Transverse colon (tissue), 4 donors: ENCODE measurements at regions of chr12 and their contacts with region 1.

Region 1: DNA sequence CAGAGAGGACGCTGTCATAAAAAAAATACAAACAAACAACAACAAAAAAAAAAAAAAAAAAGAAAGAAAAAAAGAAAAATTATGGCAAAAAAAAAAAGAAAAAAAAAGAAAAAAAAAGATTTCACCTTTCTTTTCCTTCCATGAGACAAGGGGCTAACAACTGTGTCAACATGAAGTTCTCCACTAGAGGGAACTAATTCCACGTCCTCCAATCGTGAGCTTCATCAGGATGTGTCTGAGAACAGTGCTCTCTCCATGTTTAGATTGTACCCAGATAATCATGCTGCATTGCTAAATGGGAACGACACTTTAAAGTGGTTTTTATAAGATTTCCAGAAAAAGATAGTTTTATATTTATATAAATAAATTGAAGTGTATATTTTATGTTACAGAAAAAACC is 96.2 kb upstream of the PTPRB start:
- DNase-seq: no peak
- H3K4me3 ChIP-seq: no peak overlapping the region
- H3K27ac ChIP-seq: no peak overlapping the region
- H3K4me1 ChIP-seq: peaks cover 0 to 10% (median 0%) of the 10 kb centered on the region in 4 donors
- H3K27me3 ChIP-seq: no peaks in the 10 kb centered on the region
- CTCF ChIP-seq: peak; percentile 51 to 78 (median 60)
- EP300 ChIP-seq: no peak
- POLR2A ChIP-seq: no peak

Region 2: DNA sequence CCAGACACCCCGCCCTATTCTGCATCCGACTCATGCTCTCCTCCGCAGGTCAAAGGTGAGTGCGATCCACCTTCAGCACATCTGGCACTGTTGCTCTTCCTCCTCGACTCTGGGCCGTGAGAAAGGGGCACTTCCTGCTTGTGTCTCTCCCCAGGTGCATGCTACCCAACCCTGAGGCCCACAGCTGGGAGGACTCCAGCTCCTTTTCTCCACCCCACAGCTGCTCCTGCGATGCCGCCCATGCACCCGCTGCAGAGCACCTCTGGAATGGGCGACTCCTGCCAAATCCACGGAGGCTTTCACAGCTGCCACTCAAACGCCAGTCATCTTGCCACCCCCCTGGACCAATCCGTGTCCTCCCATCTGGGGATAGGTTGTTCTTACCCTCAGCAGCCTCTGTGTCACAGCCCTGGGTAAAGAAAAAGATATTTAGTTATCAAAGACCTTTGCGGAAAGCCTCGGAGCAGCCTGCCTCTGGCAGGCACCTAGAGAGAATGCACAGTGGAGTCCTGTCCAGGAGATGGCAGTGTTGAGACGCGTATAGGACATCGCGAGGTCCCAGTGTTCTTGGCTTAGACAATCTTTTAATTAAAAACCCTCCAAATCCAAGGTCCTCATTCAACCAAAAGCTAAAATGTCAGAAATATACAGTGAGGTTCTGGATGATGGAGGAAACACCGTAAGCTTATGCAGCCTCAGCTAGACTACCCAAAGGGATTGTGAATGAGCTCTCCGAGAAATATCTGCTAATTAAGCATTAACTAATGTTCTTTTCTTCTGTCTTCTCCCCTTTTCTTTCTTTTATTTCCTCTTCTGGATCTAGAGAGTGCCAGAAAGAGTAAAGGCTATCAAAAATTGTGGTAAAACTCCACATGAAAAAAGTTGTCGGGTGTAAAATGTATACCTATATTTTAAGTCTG is 854.1 kb before region 1 on chr12:
- in situ Hi-C with region 1: loop called in 3 of 4 experiments (anchors 10 to 25 kb)
- intact Hi-C with region 1: loop called (anchors 10 kb)
- DNase-seq: peak; percentile 75
- H3K4me3 ChIP-seq: peak overlapping the region in 2 of 4 donors; percentile 7 to 24
- H3K27ac ChIP-seq: no peak overlapping the region
- H3K4me1 ChIP-seq: peaks cover 0 to 7% (median 3%) of the 10 kb centered on the region in 4 donors
- H3K27me3 ChIP-seq: no peaks in the 10 kb centered on the region
- CTCF ChIP-seq: peak; percentile 83 to 91 (median 85)
- EP300 ChIP-seq: no peak
- POLR2A ChIP-seq: no peak

Region 3: DNA sequence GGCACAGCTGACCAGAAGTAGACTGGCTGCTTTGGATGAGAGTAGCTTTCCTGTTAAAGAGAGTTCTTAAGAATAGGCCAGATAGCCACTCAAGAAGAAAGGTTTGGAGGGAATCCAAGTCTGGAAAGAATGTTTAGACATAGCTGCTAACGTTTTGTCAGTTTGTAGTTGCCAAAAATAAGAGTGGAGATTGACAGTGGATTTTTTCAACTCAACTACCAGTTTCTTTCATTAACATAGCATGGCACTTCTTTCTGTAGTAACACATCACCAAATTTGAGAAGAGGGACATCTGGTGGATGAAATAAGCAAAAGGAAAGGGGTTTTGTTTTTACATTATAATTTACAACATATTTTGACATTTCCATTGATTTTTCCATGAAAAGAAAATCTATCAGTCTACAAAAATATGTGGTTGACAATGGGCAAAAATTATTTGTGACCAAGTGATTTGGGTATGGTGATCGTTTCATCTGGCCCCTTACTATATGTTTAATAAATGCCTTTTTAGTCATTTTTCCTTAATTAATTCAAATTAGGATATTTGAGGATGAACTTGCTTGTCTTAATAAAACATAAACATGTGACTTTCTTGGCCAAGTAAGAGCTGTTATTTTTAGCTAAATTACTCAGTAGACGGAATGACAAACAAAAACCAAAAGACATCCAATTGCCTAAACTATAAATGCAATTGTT is 116.0 kb after region 1 on chr12:
- in situ Hi-C with region 1: loop called in 1 of 4 experiments (anchors 10 kb)
- intact Hi-C with region 1: no loop called
- DNase-seq: no peak
- H3K4me3 ChIP-seq: no peak overlapping the region
- H3K27ac ChIP-seq: no peak overlapping the region
- H3K4me1 ChIP-seq: peaks cover 0 to 6% (median 0%) of the 10 kb centered on the region in 4 donors
- H3K27me3 ChIP-seq: no peaks in the 10 kb centered on the region
- CTCF ChIP-seq: peak; percentile 18 to 60 (median 40)
- EP300 ChIP-seq: no peak
- POLR2A ChIP-seq: no peak

Region 4: DNA sequence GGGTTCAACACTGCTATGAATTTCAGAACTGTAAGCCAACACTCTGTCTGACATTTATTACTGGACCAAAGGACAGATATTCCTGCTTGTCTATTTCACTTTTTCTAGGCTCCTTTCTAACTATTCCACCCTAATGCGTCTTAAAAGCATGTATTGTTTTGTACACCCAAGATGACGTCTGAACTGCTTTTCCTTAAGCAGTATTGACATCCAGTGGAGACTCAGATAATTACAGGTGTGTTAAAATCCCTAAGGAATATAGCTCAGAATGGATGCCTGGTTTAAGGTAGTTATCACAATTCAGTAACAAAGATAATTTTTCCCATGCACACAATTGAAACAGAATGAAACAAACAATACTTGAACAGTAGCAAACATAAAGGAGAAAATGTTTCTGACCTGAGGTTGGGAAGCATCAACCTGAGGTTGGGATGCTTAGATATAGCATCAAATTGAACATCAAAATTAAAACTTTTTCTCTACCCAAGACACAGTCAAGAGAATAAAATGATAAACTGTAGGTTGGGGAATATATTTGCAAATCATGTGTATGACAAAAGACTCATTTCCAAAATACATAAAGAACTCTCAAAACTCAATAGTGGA is 280.9 kb after region 1 on chr12:
- in situ Hi-C with region 1: loop called in 3 of 4 experiments (anchors 10 to 25 kb)
- intact Hi-C with region 1: no loop called
- DNase-seq: no peak
- H3K4me3 ChIP-seq: no peak overlapping the region
- H3K27ac ChIP-seq: no peak overlapping the region
- H3K4me1 ChIP-seq: no peaks in the 10 kb centered on the region
- H3K27me3 ChIP-seq: no peaks in the 10 kb centered on the region
- CTCF ChIP-seq: peak; percentile 31 to 63 (median 40)
- EP300 ChIP-seq: no peak
- POLR2A ChIP-seq: no peak